ENCODE measurements at regions of chr3 and their contacts with region 1.

Region 1: DNA sequence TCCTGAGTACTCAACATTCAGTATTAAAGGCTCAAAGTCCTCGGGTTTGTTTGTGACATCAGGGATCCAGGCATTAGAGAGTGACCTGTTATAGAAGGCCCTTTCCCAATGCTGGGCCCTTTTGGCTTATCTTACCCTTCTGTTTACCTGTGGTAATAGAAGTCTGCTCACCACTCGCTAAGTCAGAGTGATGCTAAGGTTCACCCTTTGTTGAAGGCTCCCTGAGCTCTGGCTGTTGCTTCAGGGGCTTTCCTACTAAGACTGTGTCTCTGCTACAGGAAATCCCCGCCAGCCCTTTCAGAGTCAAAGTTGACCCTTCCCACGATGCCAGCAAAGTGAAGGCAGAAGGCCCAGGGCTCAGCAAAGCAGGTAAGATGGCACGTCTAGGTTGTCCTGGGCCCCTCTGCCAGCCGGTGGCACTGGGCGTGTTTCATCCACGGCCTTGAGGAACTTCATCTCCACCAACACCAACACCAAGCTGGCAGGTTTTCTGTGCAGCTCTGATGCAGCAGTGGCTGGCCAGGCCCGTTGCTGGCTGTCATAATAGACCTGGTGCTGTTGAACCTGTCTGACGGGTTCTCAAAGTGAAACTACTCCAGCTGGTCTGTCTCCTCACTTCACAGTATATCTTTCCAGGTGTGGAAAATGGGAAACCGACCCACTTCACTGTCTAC is 99.1 kb downstream of the DNASE1L3 start:
- DNase-seq: peak; percentile 76 to 84
- H3K4me3 ChIP-seq: no peak overlapping the region
- H3K4me3 Mint-ChIP-seq: no peak overlapping the region
- H3K27ac Mint-ChIP-seq: peak overlapping the region; percentile 72
- H3K4me1 ChIP-seq: peaks cover 29% of the 10 kb centered on the region
- H3K4me1 Mint-ChIP-seq: peaks cover 33% of the 10 kb centered on the region
- H3K27me3 ChIP-seq: no peaks in the 10 kb centered on the region
- H3K27me3 Mint-ChIP-seq: no peaks in the 10 kb centered on the region
- CTCF ChIP-seq: no peak

Region 2: GRCh38 chr3:57852896-57853295 is 258.8 kb before region 1 on chr3:
- CTCF ChIA-PET with region 1: no interaction called
- POLR2A ChIA-PET with region 1: no interaction called
- intact Hi-C with region 1: no loop called
- DNase-seq: no peak
- H3K4me3 ChIP-seq: no peak overlapping the region
- H3K4me3 Mint-ChIP-seq: no peak overlapping the region
- H3K27ac Mint-ChIP-seq: no peak overlapping the region
- H3K4me1 ChIP-seq: peaks cover 14% of the 10 kb centered on the region
- H3K4me1 Mint-ChIP-seq: peaks cover 20% of the 10 kb centered on the region
- H3K27me3 ChIP-seq: no peaks in the 10 kb centered on the region
- H3K27me3 Mint-ChIP-seq: no peaks in the 10 kb centered on the region
- CTCF ChIP-seq: peak in 1 of 2 experiments; percentile 3

Region 3: GRCh38 chr3:58008140-58009025 is 103.3 kb before region 1 on chr3 and contains the start of gene FLNB:
- CTCF ChIA-PET with region 1: interaction called, 3 read pairs
- POLR2A ChIA-PET with region 1: no interaction called
- intact Hi-C with region 1: loop called (anchors 5 kb)
- DNase-seq: peak; percentile 77 to 85
- H3K4me3 ChIP-seq: peak within 1 kb of the TSS; percentile 100
- H3K4me3 Mint-ChIP-seq: peak within 1 kb of the TSS; percentile 90
- H3K27ac Mint-ChIP-seq: peak within 1 kb of the TSS; percentile 63
- H3K4me1 ChIP-seq: peaks cover 60% of the 10 kb centered on the region
- H3K4me1 Mint-ChIP-seq: peaks cover 23% of the 10 kb centered on the region
- H3K27me3 ChIP-seq: no peaks in the 10 kb centered on the region
- H3K27me3 Mint-ChIP-seq: no peaks in the 10 kb centered on the region
- CTCF ChIP-seq: peak; percentile 74 to 88
- total RNA-seq, gene FLNB: 315 and 331 TPM in 2 replicates

Region 4: DNA sequence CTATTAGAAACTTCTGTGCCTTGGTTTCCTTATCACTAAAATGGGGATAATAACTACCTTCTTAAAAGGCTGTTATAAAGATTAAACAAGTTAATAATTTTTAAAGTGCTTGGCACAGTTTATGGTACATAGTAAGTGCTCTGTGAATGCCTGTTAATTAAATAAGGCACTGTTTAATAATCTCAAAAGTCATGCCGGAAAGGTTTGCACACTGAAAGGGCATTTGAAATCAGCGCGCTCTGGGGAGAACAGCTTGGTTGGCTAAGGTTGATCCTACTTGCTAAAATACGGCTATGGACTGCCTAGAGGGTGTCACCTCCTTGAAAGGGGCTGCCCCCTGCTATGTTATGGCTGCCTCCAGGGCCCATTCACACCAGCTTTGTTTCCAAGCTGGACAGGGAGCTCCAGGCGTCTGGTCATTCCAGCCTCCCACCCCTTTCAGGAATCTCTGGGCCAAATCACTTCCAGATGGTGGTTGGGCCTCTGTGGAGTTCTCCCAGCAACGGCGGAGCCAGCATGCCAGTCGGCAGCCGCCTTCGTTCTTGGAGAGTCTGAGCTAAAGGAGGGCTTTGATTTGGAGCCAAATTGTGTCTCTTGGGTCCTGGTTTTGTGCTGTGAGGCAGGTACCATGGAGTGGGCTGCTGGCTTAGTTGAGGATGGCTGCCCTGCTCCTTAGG is 97.5 kb before region 1 on chr3:
- CTCF ChIA-PET with region 1: no interaction called
- POLR2A ChIA-PET with region 1: interaction called, 13 read pairs
- intact Hi-C with region 1: loop called (anchors 5 kb)
- DNase-seq: no peak
- H3K4me3 ChIP-seq: no peak overlapping the region
- H3K4me3 Mint-ChIP-seq: no peak overlapping the region
- H3K27ac Mint-ChIP-seq: peak overlapping the region; percentile 35
- H3K4me1 ChIP-seq: peaks cover 77% of the 10 kb centered on the region
- H3K4me1 Mint-ChIP-seq: peaks cover 30% of the 10 kb centered on the region
- H3K27me3 ChIP-seq: no peaks in the 10 kb centered on the region
- H3K27me3 Mint-ChIP-seq: no peaks in the 10 kb centered on the region
- CTCF ChIP-seq: no peak

Region 5: DNA sequence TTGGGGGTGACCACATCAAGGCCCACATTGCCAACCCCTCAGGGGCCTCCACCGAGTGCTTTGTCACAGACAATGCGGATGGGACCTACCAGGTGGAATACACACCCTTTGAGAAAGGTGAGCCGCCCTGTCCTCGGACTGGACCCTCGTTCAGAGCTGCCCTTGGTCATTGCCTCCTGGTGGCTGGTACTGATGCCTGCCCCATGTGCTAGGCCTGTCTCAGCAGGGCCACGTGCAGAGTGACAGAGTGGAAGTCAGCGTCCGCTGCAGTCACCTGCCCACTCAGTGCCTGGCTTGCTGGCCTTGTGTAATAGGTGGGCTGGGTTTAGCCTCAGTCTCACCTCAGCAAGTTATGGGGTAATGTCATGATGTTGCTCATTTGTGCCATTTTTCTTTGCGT is 12.7 kb after region 1 on chr3:
- CTCF ChIA-PET with region 1: no interaction called
- POLR2A ChIA-PET with region 1: no interaction called
- intact Hi-C with region 1: no loop called
- DNase-seq: no peak
- H3K4me3 ChIP-seq: no peak overlapping the region
- H3K4me3 Mint-ChIP-seq: no peak overlapping the region
- H3K27ac Mint-ChIP-seq: no peak overlapping the region
- H3K4me1 ChIP-seq: no peaks in the 10 kb centered on the region
- H3K4me1 Mint-ChIP-seq: peaks cover 6% of the 10 kb centered on the region
- H3K27me3 ChIP-seq: no peaks in the 10 kb centered on the region
- H3K27me3 Mint-ChIP-seq: no peaks in the 10 kb centered on the region
- CTCF ChIP-seq: no peak

Region 6: DNA sequence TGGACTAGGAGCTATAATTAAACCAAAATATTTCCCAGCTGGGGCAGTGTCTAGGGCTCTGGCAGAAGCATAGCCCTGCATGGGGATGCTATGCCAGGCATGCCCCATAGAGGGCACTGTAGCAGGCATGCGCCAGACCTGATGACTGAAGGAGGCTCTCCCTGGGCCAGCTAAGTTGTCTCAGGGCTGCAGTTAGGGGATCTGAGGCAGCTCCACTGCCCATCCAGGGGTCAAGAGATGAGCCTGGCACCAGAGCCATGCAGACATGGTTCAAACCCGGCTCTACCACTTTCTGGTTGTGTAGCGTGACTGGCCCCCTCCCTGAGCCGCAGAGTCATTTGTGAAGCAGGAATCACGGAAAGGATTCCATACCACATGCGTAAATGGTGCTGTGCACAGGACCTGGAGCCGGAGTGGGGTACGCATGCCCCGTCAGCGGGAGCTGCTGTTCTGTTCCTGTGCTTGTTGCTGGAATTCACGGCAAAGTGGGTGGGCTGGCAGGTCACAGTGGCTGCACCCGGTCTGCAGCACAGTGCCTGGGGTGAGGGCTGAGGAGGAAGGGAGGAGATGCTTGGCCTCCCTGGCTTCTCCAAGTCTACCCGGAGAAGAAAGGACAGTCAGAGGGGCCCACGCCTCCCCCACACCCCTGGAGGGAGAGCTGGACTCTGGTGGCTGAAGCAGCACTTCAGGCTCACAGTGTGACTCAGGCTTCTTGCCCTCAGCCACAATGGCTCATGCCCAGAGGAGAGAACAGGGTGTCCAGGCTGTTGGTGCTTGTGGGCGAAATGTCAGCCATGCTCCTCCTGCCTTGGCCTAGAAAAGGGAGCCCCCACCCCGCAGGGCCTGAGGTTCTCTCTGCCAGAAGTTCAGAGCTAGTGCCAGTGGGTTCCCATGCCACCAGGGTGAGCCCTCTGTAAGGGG is 56.0 kb after region 1 on chr3:
- CTCF ChIA-PET with region 1: no interaction called
- POLR2A ChIA-PET with region 1: no interaction called
- intact Hi-C with region 1: loop called (anchors 5 kb)
- DNase-seq: peak; percentile 65 to 78
- H3K4me3 ChIP-seq: no peak overlapping the region
- H3K4me3 Mint-ChIP-seq: no peak overlapping the region
- H3K27ac Mint-ChIP-seq: peak overlapping the region; percentile 68
- H3K4me1 ChIP-seq: peaks cover 52% of the 10 kb centered on the region
- H3K4me1 Mint-ChIP-seq: peaks cover 48% of the 10 kb centered on the region
- H3K27me3 ChIP-seq: no peaks in the 10 kb centered on the region
- H3K27me3 Mint-ChIP-seq: no peaks in the 10 kb centered on the region
- CTCF ChIP-seq: peak; percentile 75 to 76

Measured in Caco-2 (cell line).